ENCODE measurements at regions of chr12 and their contacts with region 1.

Region 1: GRCh38 chr12:53451661-53452158 is at the start of gene PCBP2:
- DNase-seq: peak; percentile 98
- H3K4me3 ChIP-seq: peak within 1 kb of the TSS; percentile 61 to 80
- H3K27ac ChIP-seq: peak within 1 kb of the TSS; percentile 94 to 98
- H3K4me1 ChIP-seq: peaks cover 4 to 12% of the 10 kb centered on the region in 2 donors
- H3K27me3 ChIP-seq: no peaks in the 10 kb centered on the region
- CTCF ChIP-seq: peak; percentile 84 to 97 (median 93)
- POLR2A ChIP-seq: peak; percentile 69 to 78
- total RNA-seq, gene PCBP2: 364 to 929 (median 383) TPM

Region 2: DNA sequence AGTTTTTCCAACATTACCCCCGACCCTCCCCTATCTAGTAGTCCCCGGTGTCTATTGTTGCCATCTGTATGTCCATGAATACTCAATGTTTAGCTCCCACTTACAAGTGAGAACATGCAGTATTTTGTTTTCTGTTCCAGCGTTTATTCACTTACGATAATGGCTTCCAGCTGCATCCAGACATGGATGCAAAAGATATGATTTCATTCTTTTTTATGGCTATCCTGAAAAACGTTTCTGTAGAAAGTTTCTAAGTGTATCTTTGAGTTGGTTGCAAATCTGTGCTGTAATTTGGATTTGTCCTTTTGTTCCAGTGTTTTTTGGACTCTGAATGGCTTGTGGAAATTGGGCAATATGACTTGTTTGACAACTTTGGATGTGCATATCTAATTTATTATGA is 60.0 kb before region 1 on chr12:
- intact Hi-C with region 1: no loop called
- DNase-seq: peak in 1 of 2 donors; percentile 2
- H3K4me3 ChIP-seq: no peak overlapping the region
- H3K27ac ChIP-seq: peak overlapping the region; percentile 78 to 85
- H3K4me1 ChIP-seq: peaks cover 0 to 3% of the 10 kb centered on the region in 2 donors
- H3K27me3 ChIP-seq: no peaks in the 10 kb centered on the region
- CTCF ChIP-seq: no peak
- POLR2A ChIP-seq: no peak

Region 3: DNA sequence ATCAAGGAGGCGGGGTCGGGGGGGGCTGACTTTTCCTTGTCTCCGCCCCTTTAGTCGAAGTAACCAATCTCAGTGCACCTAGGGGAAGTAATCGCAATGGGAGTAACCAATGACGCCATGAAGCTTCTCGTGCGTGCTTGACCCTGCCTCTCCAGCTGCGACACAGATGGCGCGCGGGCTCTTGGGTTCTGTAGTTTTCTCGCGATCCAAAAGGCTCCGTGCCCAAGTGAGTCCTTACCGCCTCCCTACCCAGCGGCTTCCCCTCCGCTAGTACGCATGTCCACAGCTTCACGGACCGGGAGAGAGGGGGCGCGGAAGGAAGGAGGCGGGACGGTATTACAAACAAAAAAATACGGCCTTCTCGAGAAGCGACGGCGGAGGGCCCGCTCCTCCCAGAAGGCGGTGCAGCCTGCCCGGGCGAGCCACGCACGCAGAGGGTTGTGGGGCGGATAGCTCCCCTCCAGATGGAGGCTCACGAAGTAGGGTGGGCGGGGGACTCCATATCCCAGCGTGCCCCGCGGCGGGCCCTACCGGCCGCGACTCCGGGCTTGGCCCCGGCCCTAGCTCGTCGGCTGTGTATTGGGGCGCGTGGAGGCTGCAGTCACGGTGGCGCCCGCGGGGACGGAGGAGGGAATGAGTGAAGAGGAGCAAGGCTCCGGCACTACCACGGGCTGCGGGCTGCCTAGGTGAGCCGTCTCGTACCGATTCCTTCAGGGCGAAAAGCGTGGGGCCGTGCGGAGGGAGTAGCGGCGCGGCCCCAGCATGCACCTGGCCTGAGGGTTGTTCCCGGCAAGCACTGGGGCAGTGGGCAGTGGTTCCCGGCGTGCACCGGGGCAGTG is 49.3 kb after region 1 on chr12 and contains the start of gene TARBP2:
- intact Hi-C with region 1: loop called (anchors 10 kb)
- DNase-seq: peak; percentile 99 to 100
- H3K4me3 ChIP-seq: peak within 1 kb of the TSS; percentile 68 to 72
- H3K27ac ChIP-seq: peak within 1 kb of the TSS; percentile 96 to 99
- H3K4me1 ChIP-seq: peaks cover 0 to 19% of the 10 kb centered on the region in 2 donors
- H3K27me3 ChIP-seq: no peaks in the 10 kb centered on the region
- CTCF ChIP-seq: peak in 3 of 4 experiments; percentile 4 to 19 (median 18)
- POLR2A ChIP-seq: peak; percentile 20 to 74
- total RNA-seq, gene TARBP2: 6.7 to 33.2 (median 19.0) TPM